HEK293 (cell line): ENCODE measurements at regions of chr4 and their contacts with region 1.

Region 1: GRCh38 chr4:184538023-184538599 is 63.8 kb upstream of the IRF2 start:
- H3K4me3 ChIP-seq: peak overlapping the region; percentile 45
- H3K27ac ChIP-seq: peak overlapping the region; percentile 13; the same call in 1 of the 2 replicates
- H3K4me1 ChIP-seq: no peaks in the 10 kb centered on the region; the same call in 1 of the 2 replicates
- CTCF ChIP-seq: peak; percentile 55; the same call in 1 of the 2 replicates

Region 2: DNA sequence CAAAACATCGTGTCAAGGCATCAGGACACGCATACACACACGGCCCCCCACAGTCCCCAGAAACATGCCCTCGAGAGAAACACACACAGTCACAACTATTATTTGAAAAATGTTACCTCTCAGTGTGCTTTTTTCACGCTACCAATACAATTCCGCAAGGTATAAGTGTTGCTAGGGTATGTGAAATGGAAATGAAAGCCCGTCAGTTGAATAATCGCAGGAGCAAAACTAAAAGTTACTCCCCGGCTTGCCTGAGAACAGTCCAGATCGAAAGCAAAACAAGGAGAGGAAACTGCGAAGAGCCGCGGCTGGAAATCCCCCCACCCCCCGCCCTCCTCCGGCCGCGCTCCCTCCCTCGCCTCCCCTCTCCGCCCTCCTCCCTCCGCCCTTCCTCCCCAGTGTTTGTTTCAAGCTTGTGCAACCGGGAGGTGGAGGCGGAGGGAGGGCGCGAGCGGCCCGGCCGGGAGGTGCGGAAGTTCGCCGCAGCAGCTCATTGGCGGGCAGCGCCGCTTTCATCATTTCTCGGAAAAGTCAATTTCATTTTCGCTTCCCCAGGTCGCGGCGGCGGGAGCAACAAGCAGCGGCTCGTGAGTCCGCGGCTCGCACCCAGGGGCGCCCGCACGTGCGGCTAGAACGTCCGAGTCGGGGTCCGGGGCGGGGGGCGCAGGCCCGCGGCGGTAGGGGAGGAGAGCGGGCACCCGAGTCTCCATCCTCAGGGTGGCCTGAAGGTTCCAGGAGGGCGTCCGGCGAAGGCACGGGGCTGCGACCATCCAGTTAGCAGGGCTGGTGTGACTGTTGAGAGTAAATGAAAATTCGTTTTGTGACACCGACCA is 63.6 kb before region 1 on chr4 and contains the start of gene IRF2:
- CTCF ChIA-PET with region 1: interaction called, 4 read pairs
- POLR2A ChIA-PET with region 1: interaction called, 16 read pairs
- H3K4me3 ChIP-seq: peak within 1 kb of the TSS; percentile 81
- H3K27ac ChIP-seq: peak within 1 kb of the TSS; percentile 76
- H3K4me1 ChIP-seq: peaks cover 9% of the 10 kb centered on the region; the same call in 1 of the 2 replicates
- CTCF ChIP-seq: no peak; the same call in 1 of the 2 replicates